CD4-positive, alpha-beta T cell (primary cell): ENCODE measurements at regions of chr19 and their contacts with region 1.

Region 1: GRCh38 chr19:54029930-54030490 is 33.7 kb downstream of the VSTM1 start:
- DNase-seq: peak; percentile 30 to 75 (median 44)
- ATAC-seq: no peak
- H3K4me3 ChIP-seq: no peak overlapping the region
- H3K4me3 Mint-ChIP-seq: no peak overlapping the region
- H3K27ac ChIP-seq: no peak overlapping the region
- H3K27ac Mint-ChIP-seq: no peak overlapping the region
- H3K4me1 ChIP-seq: peaks cover 2% of the 10 kb centered on the region
- H3K4me1 Mint-ChIP-seq: no peaks in the 10 kb centered on the region
- H3K27me3 ChIP-seq: peaks cover 2 to 3% of the 10 kb centered on the region in 2 experiments
- H3K27me3 Mint-ChIP-seq: peaks cover 41% of the 10 kb centered on the region
- CTCF ChIP-seq: peak; percentile 50

Region 2: GRCh38 chr19:53772943-53773342 is 257.1 kb before region 1 on chr19:
- CTCF ChIA-PET with region 1: no interaction called
- POLR2A ChIA-PET with region 1: no interaction called
- intact Hi-C with region 1: loop called in 1 of 2 experiments (anchors 5 kb)
- DNase-seq: peak in 12 of 14 experiments; percentile 10 to 73 (median 32)
- ATAC-seq: no peak
- H3K4me3 ChIP-seq: no peak overlapping the region
- H3K4me3 Mint-ChIP-seq: no peak overlapping the region
- H3K27ac ChIP-seq: no peak overlapping the region
- H3K27ac Mint-ChIP-seq: no peak overlapping the region
- H3K4me1 ChIP-seq: no peaks in the 10 kb centered on the region
- H3K4me1 Mint-ChIP-seq: no peaks in the 10 kb centered on the region
- H3K27me3 ChIP-seq: no peaks in the 10 kb centered on the region
- H3K27me3 Mint-ChIP-seq: peaks cover 7% of the 10 kb centered on the region
- CTCF ChIP-seq: peak; percentile 69

Region 3: DNA sequence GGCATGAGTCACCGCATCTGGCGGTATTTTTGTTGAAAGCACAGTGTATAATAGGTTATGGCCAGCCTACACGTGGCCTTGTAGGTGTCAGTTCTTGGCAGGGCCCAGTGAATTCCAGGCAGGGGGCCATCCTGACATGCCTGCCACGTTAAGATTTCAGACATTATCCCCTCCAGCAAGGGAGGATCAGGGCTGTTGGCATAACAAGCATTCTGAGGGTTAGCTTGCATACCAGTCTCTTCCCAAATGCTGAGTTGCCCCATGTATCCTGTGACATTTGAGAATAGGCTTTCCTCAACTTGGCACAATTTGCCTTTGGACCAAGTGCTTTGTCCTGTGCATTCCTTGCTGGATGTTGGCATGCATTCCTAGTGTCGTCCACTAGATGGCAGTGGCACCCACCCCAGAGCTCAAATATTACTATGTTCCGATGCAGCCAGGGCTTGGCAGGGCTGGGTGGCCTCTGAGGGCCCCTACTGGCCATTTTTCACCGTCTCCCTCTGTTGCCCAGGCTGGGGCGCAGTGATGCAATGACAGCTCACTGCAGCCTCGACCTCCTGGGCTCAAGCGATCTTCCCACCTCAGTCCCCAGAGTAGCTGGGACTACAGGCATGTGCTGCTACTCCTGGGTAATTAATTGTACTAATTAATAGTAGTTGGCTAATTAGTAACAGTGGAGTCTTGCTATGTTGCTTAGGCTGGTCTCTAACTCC is 237.1 kb before region 1 on chr19:
- CTCF ChIA-PET with region 1: interaction called, 19 read pairs
- POLR2A ChIA-PET with region 1: no interaction called
- intact Hi-C with region 1: loop called in 1 of 2 experiments (anchors 1 kb)
- DNase-seq: peak; percentile 54 to 87 (median 68)
- ATAC-seq: peak; percentile 100
- H3K4me3 ChIP-seq: no peak overlapping the region
- H3K4me3 Mint-ChIP-seq: no peak overlapping the region
- H3K27ac ChIP-seq: no peak overlapping the region
- H3K27ac Mint-ChIP-seq: no peak overlapping the region
- H3K4me1 ChIP-seq: no peaks in the 10 kb centered on the region
- H3K4me1 Mint-ChIP-seq: no peaks in the 10 kb centered on the region
- H3K27me3 ChIP-seq: no peaks in the 10 kb centered on the region
- H3K27me3 Mint-ChIP-seq: peaks cover 16% of the 10 kb centered on the region
- CTCF ChIP-seq: peak; percentile 94

Region 4: GRCh38 chr19:54541712-54542111 is 511.7 kb after region 1 on chr19:
- CTCF ChIA-PET with region 1: no interaction called
- POLR2A ChIA-PET with region 1: no interaction called
- intact Hi-C with region 1: no loop called
- DNase-seq: no peak
- ATAC-seq: no peak
- H3K4me3 ChIP-seq: no peak overlapping the region
- H3K4me3 Mint-ChIP-seq: no peak overlapping the region
- H3K27ac ChIP-seq: no peak overlapping the region
- H3K27ac Mint-ChIP-seq: no peak overlapping the region
- H3K4me1 ChIP-seq: no peaks in the 10 kb centered on the region
- H3K4me1 Mint-ChIP-seq: no peaks in the 10 kb centered on the region
- H3K27me3 ChIP-seq: no peaks in the 10 kb centered on the region
- H3K27me3 Mint-ChIP-seq: peaks cover 22% of the 10 kb centered on the region
- CTCF ChIP-seq: no peak